Upper lobe of right lung (tissue), 1 donor: ENCODE measurements at regions of chr1 and their contacts with region 1.

Region 1: GRCh38 chr1:38818175-38818976 is 41.2 kb downstream of the RRAGC start:
- DNase-seq: no peak
- ATAC-seq: peak; percentile 80
- H3K4me3 ChIP-seq: peak overlapping the region; percentile 36
- H3K27ac ChIP-seq: no peak overlapping the region
- H3K4me1 ChIP-seq: peaks cover 11% of the 10 kb centered on the region
- H3K27me3 ChIP-seq: peaks cover 65% of the 10 kb centered on the region
- CTCF ChIP-seq: peak; percentile 78

Region 2: DNA sequence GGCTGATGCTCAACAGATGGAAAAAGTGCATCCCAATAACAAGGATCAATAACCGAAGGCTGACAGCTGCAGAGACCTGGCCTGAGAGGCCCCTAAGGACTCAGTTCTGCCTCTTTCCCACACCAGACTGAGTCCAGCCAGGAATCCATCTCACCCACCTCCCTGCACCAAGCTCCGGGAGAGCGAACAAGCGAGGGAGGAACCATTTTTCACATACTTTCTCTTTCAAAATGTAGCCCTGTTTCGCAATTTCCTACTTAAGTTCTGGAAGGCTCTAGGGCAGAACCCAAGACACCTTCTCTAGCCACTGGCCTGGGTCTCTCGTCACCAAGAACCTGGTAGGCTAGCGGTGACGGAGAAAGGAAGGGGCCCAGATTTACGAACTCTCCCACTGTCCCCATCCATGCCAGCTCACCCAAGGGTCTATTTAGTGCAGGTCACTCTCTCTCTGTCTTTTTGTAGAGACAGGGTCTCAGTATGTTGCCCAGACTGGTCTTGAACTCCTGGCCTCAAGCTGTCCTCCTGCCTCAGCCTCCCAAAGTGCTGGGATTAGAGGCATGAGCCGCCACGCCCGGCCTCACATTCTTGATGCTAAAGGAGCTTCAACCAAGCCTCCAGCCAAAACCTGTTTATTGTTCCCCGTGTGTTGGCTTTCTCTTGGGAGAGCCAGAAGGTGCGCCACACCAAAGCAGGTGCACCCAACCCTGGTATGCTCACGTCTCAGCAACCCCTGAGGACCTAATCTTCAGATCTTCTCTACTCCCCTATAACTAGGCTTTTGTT is 1211.7 kb before region 1 on chr1:
- intact Hi-C with region 1: no loop called
- DNase-seq: no peak
- ATAC-seq: peak; percentile 66
- H3K4me3 ChIP-seq: no peak overlapping the region
- H3K27ac ChIP-seq: peak overlapping the region; percentile 67
- H3K4me1 ChIP-seq: peaks cover 13% of the 10 kb centered on the region
- H3K27me3 ChIP-seq: no peaks in the 10 kb centered on the region
- CTCF ChIP-seq: no peak

Region 3: DNA sequence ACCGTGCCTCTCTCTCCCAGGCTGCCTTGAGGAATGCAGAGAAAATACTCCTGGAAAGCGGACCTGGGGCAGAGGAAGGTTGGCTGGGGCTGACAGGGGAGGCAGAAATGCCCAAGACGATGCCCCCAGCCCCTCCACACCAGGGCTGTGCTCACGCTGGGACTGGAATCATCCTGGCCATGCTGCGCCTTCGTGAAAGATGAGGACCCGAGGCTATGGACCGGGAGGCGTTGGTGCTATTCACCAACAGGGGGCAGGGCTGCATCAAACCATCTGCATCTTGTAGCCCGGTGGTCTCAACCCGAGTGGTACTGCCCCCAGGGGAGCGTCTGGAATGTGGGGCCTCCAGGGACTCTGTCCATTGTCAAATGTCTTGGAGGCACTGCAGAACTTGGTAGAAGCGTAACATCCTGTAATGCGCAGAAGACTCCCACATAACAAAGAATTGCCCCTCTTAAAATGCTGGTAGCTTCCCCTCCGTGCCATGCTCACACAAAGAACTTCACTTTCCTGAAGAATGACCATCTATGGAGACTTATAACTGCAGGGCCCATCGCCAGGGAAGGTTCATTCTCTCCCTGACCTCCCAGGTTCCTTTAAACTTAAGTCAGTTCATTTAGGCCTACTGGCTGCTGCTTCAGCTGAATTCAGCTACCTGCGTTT is 210.0 kb before region 1 on chr1:
- intact Hi-C with region 1: loop called (anchors 10 kb)
- DNase-seq: no peak
- ATAC-seq: no peak
- H3K4me3 ChIP-seq: no peak overlapping the region
- H3K27ac ChIP-seq: no peak overlapping the region
- H3K4me1 ChIP-seq: no peaks in the 10 kb centered on the region
- H3K27me3 ChIP-seq: peaks cover 9% of the 10 kb centered on the region
- CTCF ChIP-seq: peak; percentile 45